Esophagus squamous epithelium (tissue), 5 donors: ENCODE measurements at regions of chr18 and their contacts with region 1.

Region 1: DNA sequence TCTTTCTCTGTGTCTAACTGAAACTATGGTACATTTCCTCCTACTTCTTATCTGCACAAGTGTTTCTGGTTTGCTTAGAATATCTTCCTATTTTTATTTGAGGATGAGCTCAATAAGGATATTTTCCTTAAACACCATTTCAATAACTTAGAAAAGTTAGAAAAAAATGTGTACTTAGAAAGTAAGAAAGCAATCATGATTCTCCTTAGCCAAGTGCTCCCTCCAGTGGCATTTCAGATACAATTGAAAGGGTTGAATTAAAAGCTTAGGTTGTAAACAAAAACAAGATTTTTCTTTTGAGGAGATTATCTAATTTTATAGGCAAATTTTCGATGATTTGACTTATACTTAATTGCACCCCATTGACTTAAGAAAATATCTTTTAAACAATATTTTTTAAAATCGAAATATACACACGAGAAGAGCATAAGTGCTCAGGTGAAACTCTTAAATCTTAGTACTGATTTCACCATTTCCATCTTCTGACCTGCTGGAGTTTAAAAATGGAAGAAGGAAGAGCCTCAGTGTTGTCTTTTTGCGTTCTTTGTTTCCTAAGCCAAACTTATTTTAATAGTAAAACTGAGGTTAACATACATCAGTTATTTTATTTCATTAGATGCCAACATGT is 26.9 kb downstream of the C18orf63 start:
- DNase-seq: no peak
- H3K4me3 ChIP-seq: no peak overlapping the region
- H3K27ac ChIP-seq: no peak overlapping the region
- H3K4me1 ChIP-seq: no peaks in the 10 kb centered on the region
- H3K27me3 ChIP-seq: no peaks in the 10 kb centered on the region
- CTCF ChIP-seq: peak; percentile 35 to 78 (median 68)
- POLR2A ChIP-seq: no peak

Region 2: DNA sequence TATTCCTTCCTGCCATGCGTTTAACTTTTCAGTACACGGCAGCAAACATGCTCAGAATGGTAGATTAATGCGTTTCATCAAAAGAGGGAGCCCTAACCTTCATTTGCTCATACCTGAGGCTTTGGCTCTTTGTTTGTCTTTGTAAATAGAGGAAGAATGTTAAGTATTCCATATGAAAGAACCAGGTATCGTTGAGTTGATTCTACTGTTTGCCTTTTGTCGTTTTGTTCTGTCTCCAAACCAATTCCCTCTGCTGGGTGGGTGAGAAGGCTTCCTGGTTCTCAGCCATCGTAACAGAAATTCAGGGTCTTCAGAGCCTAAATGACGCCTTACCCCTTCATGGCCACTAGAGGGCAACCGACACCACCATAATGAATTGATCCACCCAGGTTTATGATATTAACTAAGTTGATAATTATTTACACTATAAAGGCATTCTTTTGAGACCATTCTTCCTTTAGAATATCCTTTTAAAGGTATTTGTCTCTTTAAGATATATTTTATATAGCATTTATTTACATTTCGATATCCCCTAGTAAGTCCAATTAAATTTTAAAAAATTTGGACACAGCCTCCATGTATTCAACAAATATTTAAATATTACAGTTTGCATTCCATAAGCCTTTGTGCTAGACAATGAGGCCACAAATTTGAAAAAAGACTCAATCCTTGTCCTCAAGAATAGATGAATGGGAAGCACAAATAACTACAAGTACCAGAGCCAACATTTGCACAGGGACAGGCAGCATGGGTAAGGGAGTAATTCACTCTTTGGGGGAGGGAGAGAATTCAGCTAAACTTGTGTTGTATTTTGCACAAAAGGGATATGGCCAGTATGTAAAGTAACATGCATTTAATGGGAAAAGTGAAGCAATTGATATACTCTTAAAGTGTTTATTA is 146.1 kb before region 1 on chr18:
- intact Hi-C with region 1: loop called (anchors 2 kb)
- DNase-seq: no peak
- H3K4me3 ChIP-seq: peak overlapping the region in 3 of 4 donors; percentile 16 to 42 (median 26)
- H3K27ac ChIP-seq: no peak overlapping the region
- H3K4me1 ChIP-seq: peaks cover 0 to 14% (median 0%) of the 10 kb centered on the region in 3 donors
- H3K27me3 ChIP-seq: peaks cover 0 to 16% (median 0%) of the 10 kb centered on the region in 4 donors
- CTCF ChIP-seq: peak; percentile 75 to 97 (median 93)
- POLR2A ChIP-seq: no peak